ENCODE measurements at regions of chr6 and their contacts with region 1.

Region 1: DNA sequence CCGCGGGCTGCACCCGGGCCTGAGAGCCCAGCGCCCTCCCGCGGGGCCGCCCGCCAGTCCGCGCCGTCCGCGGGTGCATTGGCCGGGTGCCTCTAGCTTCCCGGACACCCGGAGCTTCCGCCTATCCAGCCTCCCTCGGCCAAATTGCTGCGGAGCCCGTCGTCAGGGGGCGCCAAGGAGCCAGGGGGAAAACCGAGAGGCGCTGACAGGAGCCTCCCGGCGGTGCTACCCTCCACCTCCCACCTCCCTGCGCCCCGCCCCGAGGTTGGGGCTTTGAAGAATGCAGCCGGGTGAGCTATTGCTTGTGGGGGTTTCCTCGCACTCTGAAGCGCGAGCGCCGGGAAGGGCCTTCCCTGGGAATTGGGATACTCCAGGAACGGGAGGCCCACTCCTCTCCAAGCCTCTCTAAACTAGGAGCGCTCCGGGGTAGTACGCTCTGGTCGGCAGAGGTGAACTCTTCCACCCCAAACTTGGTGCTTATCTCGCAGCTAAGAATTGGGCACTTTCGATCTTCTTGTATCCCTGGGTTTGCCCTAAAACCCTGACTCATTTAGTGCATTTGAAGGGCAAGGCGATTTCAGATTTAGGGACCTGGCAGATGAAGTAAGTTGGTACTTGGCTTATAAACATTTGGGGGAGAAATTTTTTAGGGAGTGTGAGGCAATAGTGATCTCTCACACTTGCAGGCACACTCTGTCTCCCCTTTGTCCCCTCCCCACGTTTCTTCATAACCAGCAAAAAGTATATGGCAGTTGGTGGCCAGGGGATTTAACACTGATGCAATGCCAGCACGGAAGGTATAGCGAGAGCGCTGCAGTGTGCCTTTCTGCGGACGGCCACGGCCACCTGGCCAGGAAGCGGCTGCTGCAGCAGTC is 501 bp downstream of the BEND6 start:
- DNase-seq: peak; percentile 98
- ATAC-seq: peak; percentile 79
- H3K4me3 Mint-ChIP-seq: peak overlapping the region; percentile 90
- H3K27ac Mint-ChIP-seq: peak overlapping the region; percentile 67
- H3K4me1 Mint-ChIP-seq: peaks cover 20% of the 10 kb centered on the region
- H3K27me3 Mint-ChIP-seq: peaks cover 27% of the 10 kb centered on the region
- CTCF ChIP-seq: peak; percentile 73

Region 2: DNA sequence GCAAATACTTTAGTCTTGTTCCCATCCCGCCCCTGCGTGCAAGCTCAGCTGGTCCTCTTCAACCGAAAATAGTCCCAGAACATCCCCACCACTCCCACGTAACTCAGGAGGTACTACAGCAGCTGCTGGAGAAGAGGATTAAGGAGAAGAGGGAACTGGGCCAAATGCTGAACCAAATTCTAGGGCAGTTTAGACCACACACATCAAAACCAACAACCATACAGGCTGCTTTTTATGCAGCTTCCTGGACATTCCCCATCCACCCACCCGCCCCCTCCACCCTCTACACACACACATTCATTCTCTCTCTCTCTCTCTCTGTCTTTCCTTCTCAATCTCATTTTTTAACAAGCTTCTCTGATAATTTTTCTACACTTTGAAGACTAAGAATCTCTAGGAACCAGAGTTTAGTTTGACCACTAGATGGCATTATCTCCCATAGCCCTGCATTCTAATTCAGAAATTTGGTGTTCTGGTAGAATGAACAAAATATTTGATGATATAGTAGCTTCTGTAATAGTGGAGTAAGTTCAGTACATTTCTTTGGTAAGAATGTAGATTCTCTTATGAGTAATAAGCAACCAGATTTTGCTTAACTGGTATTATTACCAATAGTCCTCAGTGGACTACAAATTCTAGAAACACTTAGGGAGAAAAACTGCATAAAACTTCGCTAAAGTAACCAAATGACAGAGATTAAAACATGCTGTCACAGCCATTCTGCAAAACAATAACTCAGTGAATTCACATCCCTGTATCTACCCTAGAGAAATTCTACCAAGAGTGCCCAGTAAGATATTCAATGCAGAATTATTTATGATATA is 52.6 kb before region 1 on chr6:
- CTCF ChIA-PET with region 1: interaction called, 42 read pairs
- POLR2A ChIA-PET with region 1: interaction called, 3 read pairs
- DNase-seq: no peak
- ATAC-seq: peak; percentile 36
- H3K4me3 Mint-ChIP-seq: no peak overlapping the region
- H3K27ac Mint-ChIP-seq: no peak overlapping the region
- H3K4me1 Mint-ChIP-seq: peaks cover 8% of the 10 kb centered on the region
- H3K27me3 Mint-ChIP-seq: no peaks in the 10 kb centered on the region
- CTCF ChIP-seq: peak; percentile 44

Region 3: GRCh38 chr6:56927538-56928453 is 27.6 kb before region 1 on chr6:
- CTCF ChIA-PET with region 1: interaction called, 15 read pairs
- POLR2A ChIA-PET with region 1: no interaction called
- DNase-seq: peak; percentile 23
- ATAC-seq: peak; percentile 94
- H3K4me3 Mint-ChIP-seq: no peak overlapping the region
- H3K27ac Mint-ChIP-seq: no peak overlapping the region
- H3K4me1 Mint-ChIP-seq: peaks cover 10% of the 10 kb centered on the region
- H3K27me3 Mint-ChIP-seq: no peaks in the 10 kb centered on the region
- CTCF ChIP-seq: no peak

Region 4: DNA sequence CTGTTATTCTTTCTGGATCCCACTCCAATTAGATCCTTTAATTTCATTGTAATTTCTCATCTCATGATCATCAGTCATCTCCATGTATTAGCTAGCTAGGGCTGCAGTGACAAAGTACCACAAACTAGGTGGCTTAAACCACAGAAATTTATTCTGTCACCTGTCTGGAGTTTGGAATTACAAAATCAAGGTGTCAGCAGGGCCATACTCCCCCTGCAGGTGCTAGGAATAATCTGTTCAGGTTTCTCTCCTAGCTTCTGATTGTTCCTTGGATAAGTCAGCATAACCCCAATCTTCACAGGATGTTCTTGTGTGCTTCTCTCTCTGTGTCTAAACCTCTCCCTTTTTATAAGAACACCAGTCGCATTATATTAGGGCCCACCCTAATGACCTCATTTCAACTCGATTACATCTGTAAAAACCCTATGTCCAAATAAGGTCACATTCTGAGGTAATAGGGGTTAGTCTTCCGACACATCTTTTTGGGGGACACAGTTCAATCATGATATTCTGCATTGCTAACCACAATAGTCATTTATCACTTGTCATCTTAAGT is 40.0 kb after region 1 on chr6:
- CTCF ChIA-PET with region 1: interaction called, 16 read pairs
- POLR2A ChIA-PET with region 1: no interaction called
- DNase-seq: no peak
- ATAC-seq: peak; percentile 73
- H3K4me3 Mint-ChIP-seq: no peak overlapping the region
- H3K27ac Mint-ChIP-seq: no peak overlapping the region
- H3K4me1 Mint-ChIP-seq: 0 out of 2 replicates have a peak, but pooled peaks cover 3% of the 10 kb centered on the region
- H3K27me3 Mint-ChIP-seq: no peaks in the 10 kb centered on the region
- CTCF ChIP-seq: 0 out of 2 replicates have a peak, but pooled peaks have one; percentile 27

Region 5: GRCh38 chr6:57024321-57024720 is 68.9 kb after region 1 on chr6:
- CTCF ChIA-PET with region 1: interaction called, 15 read pairs
- POLR2A ChIA-PET with region 1: no interaction called
- DNase-seq: no peak
- ATAC-seq: peak; percentile 50
- H3K4me3 Mint-ChIP-seq: no peak overlapping the region
- H3K27ac Mint-ChIP-seq: peak overlapping the region; percentile 77
- H3K4me1 Mint-ChIP-seq: peaks cover 52% of the 10 kb centered on the region
- H3K27me3 Mint-ChIP-seq: peaks cover 22% of the 10 kb centered on the region
- CTCF ChIP-seq: no peak